CD8-positive, alpha-beta memory T cell (primary cell): ENCODE measurements at regions of chr2 and their contacts with region 1.

Region 1: GRCh38 chr2:231706731-231707624 is 1.3 kb upstream of the PTMA start:
- DNase-seq: peak; percentile 95 to 98 (median 97)
- H3K4me3 ChIP-seq: peak overlapping the region; percentile 86
- H3K4me3 Mint-ChIP-seq: peak overlapping the region; percentile 91 to 99 (median 98)
- H3K27ac ChIP-seq: peak overlapping the region; percentile 99
- H3K27ac Mint-ChIP-seq: peak overlapping the region; percentile 100
- H3K4me1 ChIP-seq: peaks cover 24% of the 10 kb centered on the region
- H3K4me1 Mint-ChIP-seq: peaks cover 23 to 41% (median 26%) of the 10 kb centered on the region in 3 donors
- H3K27me3 ChIP-seq: no peaks in the 10 kb centered on the region
- H3K27me3 Mint-ChIP-seq: peaks cover 0 to 16% of the 10 kb centered on the region in 2 donors

Region 2: DNA sequence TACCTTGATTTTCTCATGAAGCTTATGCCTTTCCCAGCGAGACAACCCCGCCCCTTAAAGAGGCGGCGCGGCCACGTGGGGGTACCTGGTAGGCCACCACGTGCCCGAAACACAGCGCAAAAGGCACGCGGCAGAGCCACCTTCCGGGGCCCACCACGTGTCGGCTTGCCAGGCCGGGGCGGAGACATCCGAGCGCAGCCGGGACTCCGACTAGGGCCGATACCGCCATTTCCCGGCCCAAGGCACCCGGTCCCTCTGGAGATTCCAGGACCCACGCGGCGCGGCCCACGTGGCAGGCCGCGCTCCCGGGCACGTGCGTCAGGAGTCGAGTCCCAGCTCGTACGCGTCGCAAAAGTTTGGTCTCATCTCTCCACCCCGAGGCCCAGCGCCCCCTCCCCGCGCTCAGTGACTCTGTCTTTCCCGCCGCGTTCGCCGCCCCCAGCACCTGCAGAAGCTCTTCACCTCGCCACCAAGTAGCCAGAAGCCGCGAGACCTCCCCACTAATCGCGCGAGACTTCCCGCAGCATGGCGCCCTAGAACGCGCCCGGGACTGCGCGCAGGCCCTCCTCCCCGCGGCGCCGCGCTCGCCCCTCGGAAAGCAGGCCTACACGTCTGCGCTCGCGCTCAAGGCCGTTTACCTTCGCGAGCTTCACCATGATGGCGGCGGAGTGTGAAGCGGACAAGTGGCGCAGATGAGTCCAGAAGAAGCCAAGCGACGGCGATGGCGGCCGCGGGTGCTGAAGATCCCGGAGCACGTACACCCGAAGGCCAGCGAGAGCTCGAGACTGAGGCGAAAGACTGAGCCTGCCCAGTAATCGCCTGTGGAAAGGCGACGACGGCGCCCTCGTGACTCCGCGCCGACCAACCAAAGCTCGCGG is 243.0 kb before region 1 on chr2 and contains the start of gene NCL:
- CTCF ChIA-PET with region 1: interaction called, 5 read pairs
- POLR2A ChIA-PET with region 1: interaction called, 22 read pairs
- DNase-seq: peak; percentile 79 to 93 (median 88)
- H3K4me3 ChIP-seq: peak within 1 kb of the TSS; percentile 88
- H3K4me3 Mint-ChIP-seq: peak within 1 kb of the TSS; percentile 94 to 100 (median 96)
- H3K27ac ChIP-seq: peak within 1 kb of the TSS; percentile 98
- H3K27ac Mint-ChIP-seq: peak within 1 kb of the TSS; percentile 98 to 100 (median 100)
- H3K4me1 ChIP-seq: peaks cover 42% of the 10 kb centered on the region
- H3K4me1 Mint-ChIP-seq: peaks cover 47 to 55% (median 54%) of the 10 kb centered on the region in 3 donors
- H3K27me3 ChIP-seq: no peaks in the 10 kb centered on the region
- H3K27me3 Mint-ChIP-seq: peaks cover 0 to 13% of the 10 kb centered on the region in 2 donors
- total RNA-seq, gene NCL: 1,673 to 1,772 TPM

Region 3: GRCh38 chr2:231612179-231613053 is 94.6 kb before region 1 on chr2:
- CTCF ChIA-PET with region 1: interaction called, 131 read pairs
- POLR2A ChIA-PET with region 1: interaction called, 48 read pairs
- DNase-seq: peak; percentile 79 to 92 (median 81)
- H3K4me3 ChIP-seq: peak overlapping the region; percentile 62
- H3K4me3 Mint-ChIP-seq: peak overlapping the region; percentile 54 to 90 (median 81)
- H3K27ac ChIP-seq: no peak overlapping the region
- H3K27ac Mint-ChIP-seq: peak overlapping the region; percentile 63 to 100 (median 90)
- H3K4me1 ChIP-seq: peaks cover 19% of the 10 kb centered on the region
- H3K4me1 Mint-ChIP-seq: peaks cover 16 to 40% (median 19%) of the 10 kb centered on the region in 3 donors
- H3K27me3 ChIP-seq: no peaks in the 10 kb centered on the region
- H3K27me3 Mint-ChIP-seq: peaks cover 0 to 2% of the 10 kb centered on the region in 2 donors

Region 4: DNA sequence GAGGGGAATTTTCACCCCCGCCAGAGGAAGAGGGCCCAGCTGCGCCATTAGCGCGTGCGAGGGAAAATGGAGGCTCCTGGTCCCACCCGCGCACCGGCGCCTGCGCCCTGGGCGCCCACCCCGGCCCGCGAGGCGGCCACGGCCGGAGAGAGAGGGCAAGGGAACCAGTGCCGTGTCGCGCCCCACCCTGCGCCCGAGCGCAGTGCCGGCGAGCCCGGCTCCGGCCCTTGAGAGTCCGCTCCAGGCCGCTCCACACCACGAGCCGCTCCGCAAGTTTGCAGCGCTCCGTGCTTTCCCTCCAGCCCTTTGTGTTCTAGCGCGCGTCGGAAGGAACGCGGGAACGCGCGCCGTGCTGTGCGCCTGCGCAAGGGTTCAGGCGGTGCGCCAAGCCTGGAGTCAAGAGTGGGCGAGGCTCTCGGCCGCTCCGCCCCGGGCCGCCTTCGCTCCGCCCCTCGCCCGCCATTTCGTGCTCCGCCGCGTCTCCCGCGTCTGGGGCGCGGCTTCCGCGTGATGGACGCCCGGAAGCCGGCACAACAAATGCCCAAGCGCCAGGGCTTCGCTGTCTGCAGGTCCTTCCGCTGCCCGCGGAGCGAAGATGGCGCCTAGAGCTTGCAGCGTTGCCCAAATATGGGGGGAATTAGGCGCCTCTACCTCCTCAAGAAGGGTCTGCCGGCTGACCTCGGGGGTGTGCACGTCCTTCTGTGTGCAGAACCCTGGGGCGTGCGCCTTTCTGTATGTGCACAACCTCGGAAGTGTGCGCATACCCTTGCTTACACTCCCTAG is 44.8 kb before region 1 on chr2:
- CTCF ChIA-PET with region 1: interaction called, 49 read pairs
- POLR2A ChIA-PET with region 1: interaction called, 48 read pairs
- DNase-seq: peak; percentile 94 to 99 (median 97)
- H3K4me3 ChIP-seq: peak overlapping the region; percentile 69
- H3K4me3 Mint-ChIP-seq: peak overlapping the region; percentile 74 to 88 (median 81)
- H3K27ac ChIP-seq: peak overlapping the region; percentile 83
- H3K27ac Mint-ChIP-seq: peak overlapping the region; percentile 92 to 97 (median 96)
- H3K4me1 ChIP-seq: peaks cover 11% of the 10 kb centered on the region
- H3K4me1 Mint-ChIP-seq: peaks cover 7 to 15% (median 12%) of the 10 kb centered on the region in 3 donors
- H3K27me3 ChIP-seq: no peaks in the 10 kb centered on the region
- H3K27me3 Mint-ChIP-seq: peaks cover 0 to 3% of the 10 kb centered on the region in 2 donors

Region 5: DNA sequence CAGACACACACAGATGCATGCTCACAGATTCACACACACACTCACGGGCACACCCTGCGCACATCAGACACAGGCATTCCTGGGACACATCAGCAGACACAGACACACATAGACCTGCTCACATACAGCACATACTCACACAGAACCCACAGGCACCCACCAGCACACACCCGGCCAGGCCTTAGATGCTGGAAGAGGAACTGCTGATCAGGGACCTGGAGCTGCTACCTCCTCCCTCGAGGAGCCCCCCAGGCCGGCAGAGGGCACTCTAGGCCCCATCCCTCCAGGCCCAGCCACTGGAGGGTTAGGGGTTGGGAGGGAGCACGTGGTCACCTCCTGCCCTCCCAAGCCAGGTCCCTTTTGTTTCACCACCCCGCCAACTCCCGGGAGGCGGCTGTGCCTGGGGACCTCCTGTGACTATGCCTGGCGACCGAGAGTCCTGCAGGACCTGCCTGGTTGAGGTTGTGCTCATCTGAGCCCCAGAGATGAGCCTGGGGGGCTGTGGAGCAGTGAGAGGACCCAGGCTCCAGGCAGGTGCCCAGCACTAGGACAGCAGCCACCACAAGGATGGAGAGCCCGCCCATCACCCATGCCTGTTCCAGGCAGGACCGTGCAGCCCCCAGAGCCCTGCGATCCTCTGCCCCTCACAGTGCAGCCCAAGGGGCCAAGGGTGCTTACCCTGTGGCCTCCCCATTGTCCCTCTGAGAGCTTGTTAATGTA is 19.7 kb before region 1 on chr2:
- CTCF ChIA-PET with region 1: interaction called, 209 read pairs
- POLR2A ChIA-PET with region 1: interaction called, 3 read pairs
- DNase-seq: peak; percentile 34 to 75 (median 52)
- H3K4me3 ChIP-seq: no peak overlapping the region
- H3K4me3 Mint-ChIP-seq: no peak overlapping the region
- H3K27ac ChIP-seq: no peak overlapping the region
- H3K27ac Mint-ChIP-seq: peak overlapping the region in 1 of 8 donors; percentile 43
- H3K4me1 ChIP-seq: no peaks in the 10 kb centered on the region
- H3K4me1 Mint-ChIP-seq: peaks cover 4 to 7% (median 5%) of the 10 kb centered on the region in 3 donors
- H3K27me3 ChIP-seq: no peaks in the 10 kb centered on the region
- H3K27me3 Mint-ChIP-seq: peaks cover 6 to 11% of the 10 kb centered on the region in 2 donors

Region 6: DNA sequence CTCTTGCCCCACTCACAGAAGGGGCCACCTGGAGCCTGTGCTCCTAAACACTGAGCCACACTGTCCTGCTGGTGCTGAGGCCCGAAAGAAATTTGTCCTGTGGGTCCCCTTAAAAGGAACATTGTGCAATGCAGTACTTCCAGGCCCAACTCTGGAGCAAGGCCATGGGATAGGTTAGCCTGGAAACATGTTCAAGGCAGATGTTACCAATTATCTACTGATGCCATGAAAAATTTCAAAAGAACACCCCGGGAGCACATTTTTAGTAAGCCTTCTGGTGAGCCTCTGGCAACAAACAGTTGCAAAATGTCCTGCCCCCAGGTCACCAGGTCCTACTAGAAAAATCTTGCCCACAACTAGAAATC is 11.0 kb before region 1 on chr2:
- CTCF ChIA-PET with region 1: interaction called, 209 read pairs
- POLR2A ChIA-PET with region 1: interaction called, 4 read pairs
- DNase-seq: no peak
- H3K4me3 ChIP-seq: no peak overlapping the region
- H3K4me3 Mint-ChIP-seq: no peak overlapping the region
- H3K27ac ChIP-seq: no peak overlapping the region
- H3K27ac Mint-ChIP-seq: no peak overlapping the region
- H3K4me1 ChIP-seq: no peaks in the 10 kb centered on the region
- H3K4me1 Mint-ChIP-seq: no peaks in the 10 kb centered on the region
- H3K27me3 ChIP-seq: no peaks in the 10 kb centered on the region
- H3K27me3 Mint-ChIP-seq: peaks cover 0 to 2% of the 10 kb centered on the region in 2 donors

Region 7: GRCh38 chr2:231722721-231723307 is 15.8 kb after region 1 on chr2:
- CTCF ChIA-PET with region 1: no interaction called
- POLR2A ChIA-PET with region 1: no interaction called
- DNase-seq: no peak
- H3K4me3 ChIP-seq: no peak overlapping the region
- H3K4me3 Mint-ChIP-seq: no peak overlapping the region
- H3K27ac ChIP-seq: no peak overlapping the region
- H3K27ac Mint-ChIP-seq: no peak overlapping the region
- H3K4me1 ChIP-seq: no peaks in the 10 kb centered on the region
- H3K4me1 Mint-ChIP-seq: no peaks in the 10 kb centered on the region
- H3K27me3 ChIP-seq: no peaks in the 10 kb centered on the region
- H3K27me3 Mint-ChIP-seq: peaks cover 0 to 2% of the 10 kb centered on the region in 2 donors